ENCODE measurements at regions of chr12 and their contacts with region 1.

Region 1: GRCh38 chr12:54993161-54993835 is 8.7 kb upstream of the TESPA1 start:
- DNase-seq: peak; percentile 84
- ATAC-seq: peak; percentile 70
- H3K4me3 ChIP-seq: no peak overlapping the region
- H3K4me3 Mint-ChIP-seq: peak overlapping the region; percentile 33
- H3K27ac ChIP-seq: no peak overlapping the region
- H3K27ac Mint-ChIP-seq: peak overlapping the region; percentile 71
- H3K4me1 ChIP-seq: peaks cover 38 to 42% of the 10 kb centered on the region in 2 donors
- H3K4me1 Mint-ChIP-seq: peaks cover 42% of the 10 kb centered on the region
- H3K27me3 ChIP-seq: no peaks in the 10 kb centered on the region
- H3K27me3 Mint-ChIP-seq: no peaks in the 10 kb centered on the region
- CTCF ChIP-seq: peak; percentile 92

Region 2: GRCh38 chr12:54749191-54749818 is 244.0 kb before region 1 on chr12:
- CTCF ChIA-PET with region 1: interaction called, 29 read pairs
- POLR2A ChIA-PET with region 1: no interaction called
- intact Hi-C with region 1: no loop called
- DNase-seq: peak; percentile 72
- ATAC-seq: peak; percentile 43
- H3K4me3 ChIP-seq: no peak overlapping the region
- H3K4me3 Mint-ChIP-seq: peak overlapping the region; percentile 35
- H3K27ac ChIP-seq: no peak overlapping the region
- H3K27ac Mint-ChIP-seq: no peak overlapping the region
- H3K4me1 ChIP-seq: no peaks in the 10 kb centered on the region
- H3K4me1 Mint-ChIP-seq: peaks cover 5% of the 10 kb centered on the region
- H3K27me3 ChIP-seq: no peaks in the 10 kb centered on the region
- H3K27me3 Mint-ChIP-seq: peaks cover 19% of the 10 kb centered on the region
- CTCF ChIP-seq: peak; percentile 85

Region 3: DNA sequence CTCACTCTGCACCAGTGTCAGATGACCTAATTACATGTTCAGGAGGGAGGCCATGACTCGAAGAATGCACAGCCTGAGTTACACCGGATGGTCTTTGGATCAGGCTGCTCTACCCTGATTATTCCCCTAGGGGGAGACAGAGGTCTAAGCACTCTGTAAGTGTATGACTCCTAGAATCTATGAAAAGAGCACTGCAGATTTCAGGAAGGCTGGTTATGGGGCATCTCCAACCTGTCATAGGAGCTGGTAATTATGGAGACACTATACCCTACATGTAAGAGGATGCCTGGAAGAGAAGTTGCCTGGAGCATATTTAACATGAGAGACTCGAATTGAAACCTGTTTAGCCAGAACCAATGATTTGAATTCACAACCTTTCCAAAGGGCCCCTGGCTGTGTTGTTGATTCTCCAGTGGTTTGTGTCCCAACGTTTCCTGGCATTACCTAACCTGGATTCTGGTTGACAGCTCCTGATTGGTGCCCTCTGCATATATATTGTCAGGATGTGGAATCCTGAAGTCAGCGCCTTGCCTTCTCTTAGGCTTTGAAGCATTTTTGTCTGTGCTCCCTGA is 139.2 kb before region 1 on chr12 and contains the start of gene MUCL1:
- CTCF ChIA-PET with region 1: interaction called, 10 read pairs
- POLR2A ChIA-PET with region 1: no interaction called
- intact Hi-C with region 1: no loop called
- DNase-seq: peak; percentile 68
- ATAC-seq: peak; percentile 81
- H3K4me3 ChIP-seq: no peak within 1 kb of the TSS
- H3K4me3 Mint-ChIP-seq: no peak within 1 kb of the TSS
- H3K27ac ChIP-seq: no peak within 1 kb of the TSS
- H3K27ac Mint-ChIP-seq: no peak within 1 kb of the TSS
- H3K4me1 ChIP-seq: no peaks in the 10 kb centered on the region
- H3K4me1 Mint-ChIP-seq: no peaks in the 10 kb centered on the region
- H3K27me3 ChIP-seq: no peaks in the 10 kb centered on the region
- H3K27me3 Mint-ChIP-seq: peaks cover 5% of the 10 kb centered on the region
- CTCF ChIP-seq: peak; percentile 98
- total RNA-seq, gene MUCL1: not detected in 2 replicates

Region 4: DNA sequence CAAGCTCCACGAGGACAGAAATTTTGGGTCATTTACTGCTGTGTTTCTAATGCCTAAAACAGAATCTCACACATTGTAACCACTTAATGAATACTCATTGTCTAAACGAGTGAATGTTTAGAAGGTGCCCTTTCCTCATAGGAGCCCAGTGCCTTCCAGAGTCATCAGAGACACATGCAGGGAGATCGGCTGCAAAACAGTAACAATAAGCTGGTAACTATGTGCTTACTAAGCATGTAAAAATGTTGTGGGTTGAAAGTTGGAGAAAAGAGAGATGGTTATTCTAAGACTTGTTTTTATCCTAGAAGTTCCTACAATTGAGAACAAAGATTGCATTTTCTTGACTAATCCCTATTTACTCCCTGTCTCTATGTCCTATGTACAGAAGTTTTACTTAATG is 16.1 kb before region 1 on chr12:
- CTCF ChIA-PET with region 1: interaction called, 53 read pairs
- POLR2A ChIA-PET with region 1: no interaction called
- intact Hi-C with region 1: no loop called
- DNase-seq: no peak
- ATAC-seq: no peak
- H3K4me3 ChIP-seq: no peak overlapping the region
- H3K4me3 Mint-ChIP-seq: no peak overlapping the region
- H3K27ac ChIP-seq: no peak overlapping the region
- H3K27ac Mint-ChIP-seq: no peak overlapping the region
- H3K4me1 ChIP-seq: peaks cover 4 to 6% of the 10 kb centered on the region in 2 donors
- H3K4me1 Mint-ChIP-seq: peaks cover 36% of the 10 kb centered on the region
- H3K27me3 ChIP-seq: no peaks in the 10 kb centered on the region
- H3K27me3 Mint-ChIP-seq: no peaks in the 10 kb centered on the region
- CTCF ChIP-seq: no peak

Region 5: DNA sequence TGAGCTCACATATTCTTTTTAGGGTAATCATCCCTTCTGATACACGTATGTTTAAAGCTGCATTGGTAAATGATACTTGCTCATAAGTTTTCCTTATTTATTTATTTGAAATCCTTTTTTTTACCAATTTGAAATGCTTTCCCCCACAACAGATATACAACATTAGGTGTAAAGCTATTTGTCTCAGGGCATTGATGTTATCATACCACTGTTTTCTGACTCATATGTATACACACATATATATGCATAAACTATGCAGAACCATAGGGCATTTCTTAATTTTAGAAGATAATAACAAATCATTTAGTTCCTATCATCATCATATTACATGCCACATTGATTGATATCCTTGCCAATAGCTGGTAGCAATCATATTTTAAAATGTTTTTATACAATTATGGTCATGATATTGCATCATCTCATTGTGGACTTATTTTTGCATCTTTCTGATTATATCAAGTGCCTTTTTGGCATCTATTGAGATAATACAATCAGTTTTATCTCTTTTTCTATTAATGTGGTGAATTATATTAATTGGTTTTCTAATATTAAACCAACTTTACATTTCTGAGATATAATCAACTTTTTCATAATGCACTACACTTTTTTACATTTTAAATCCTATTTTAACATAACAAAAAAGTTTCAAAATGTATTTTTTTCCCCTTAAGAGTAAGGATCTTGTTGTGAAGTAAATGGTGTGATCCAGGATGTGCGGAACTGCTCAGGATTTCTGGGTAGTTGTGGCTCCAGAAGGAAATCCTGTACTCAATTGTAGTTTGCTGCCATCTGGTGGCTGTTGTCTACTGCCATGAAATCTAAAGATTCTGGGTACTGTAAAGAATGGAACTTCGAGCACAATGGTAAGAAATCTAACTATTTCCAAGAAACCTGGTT is 149.6 kb after region 1 on chr12:
- CTCF ChIA-PET with region 1: interaction called, 32 read pairs
- POLR2A ChIA-PET with region 1: no interaction called
- intact Hi-C with region 1: loop called (anchors 1 kb)
- DNase-seq: peak; percentile 59
- ATAC-seq: no peak
- H3K4me3 ChIP-seq: no peak overlapping the region
- H3K4me3 Mint-ChIP-seq: no peak overlapping the region
- H3K27ac ChIP-seq: no peak overlapping the region
- H3K27ac Mint-ChIP-seq: no peak overlapping the region
- H3K4me1 ChIP-seq: no peaks in the 10 kb centered on the region
- H3K4me1 Mint-ChIP-seq: no peaks in the 10 kb centered on the region
- H3K27me3 ChIP-seq: no peaks in the 10 kb centered on the region
- H3K27me3 Mint-ChIP-seq: peaks cover 8% of the 10 kb centered on the region
- CTCF ChIP-seq: peak; percentile 93